ENCODE measurements at regions of chr15 and their contacts with region 1.

Region 1: GRCh38 chr15:89740137-89740536 is 10.9 kb downstream of the MESP1 start:
- DNase-seq: peak; percentile 52
- H3K4me3 ChIP-seq: no peak overlapping the region
- H3K27ac ChIP-seq: no peak overlapping the region
- H3K4me1 ChIP-seq: no peaks in the 10 kb centered on the region
- H3K27me3 ChIP-seq: no peaks in the 10 kb centered on the region
- CTCF ChIP-seq: peak; percentile 89

Region 2: GRCh38 chr15:89704411-89704810 is 35.7 kb before region 1 on chr15:
- CTCF ChIA-PET with region 1: no interaction called
- dilution Hi-C with region 1: loop called (anchors 5 kb)
- in situ Hi-C with region 1: no loop called
- intact Hi-C with region 1: no loop called
- DNase-seq: no peak
- H3K4me3 ChIP-seq: no peak overlapping the region
- H3K27ac ChIP-seq: no peak overlapping the region
- H3K4me1 ChIP-seq: no peaks in the 10 kb centered on the region
- H3K27me3 ChIP-seq: no peaks in the 10 kb centered on the region
- CTCF ChIP-seq: no peak

Region 3: DNA sequence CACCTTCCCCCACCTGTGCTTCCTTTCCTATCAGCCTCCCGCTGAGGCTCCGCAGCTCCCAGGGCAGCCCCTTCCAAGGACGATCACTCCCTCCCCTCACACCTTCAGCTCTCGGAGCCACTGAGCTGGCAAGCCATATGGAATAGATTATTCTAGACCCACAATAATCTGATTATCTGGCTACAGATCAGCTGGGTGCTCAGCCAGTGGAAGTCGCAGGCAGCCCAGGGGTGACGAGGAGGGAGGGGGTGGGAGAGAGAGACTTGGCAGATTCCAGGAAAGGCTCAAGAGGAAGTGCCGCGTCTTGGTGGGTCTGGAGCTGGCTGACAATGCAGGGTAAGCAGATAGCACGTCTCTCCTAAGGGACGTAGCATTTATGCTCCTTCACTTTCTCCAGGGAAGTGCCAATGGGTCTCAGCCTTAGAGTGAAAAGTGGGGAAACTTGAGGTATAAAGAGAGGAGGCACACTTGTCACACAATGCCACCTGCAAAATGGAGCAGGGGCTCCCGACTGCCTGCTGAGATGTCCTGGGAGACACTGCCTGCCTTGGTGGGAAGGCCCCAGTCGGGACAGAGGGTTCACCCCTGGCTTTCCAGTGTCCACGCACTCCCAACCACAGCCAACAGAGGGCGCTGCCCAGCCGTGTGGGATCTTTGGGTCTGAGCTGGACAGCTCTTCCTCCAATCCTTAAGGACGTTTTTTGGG is 20.3 kb after region 1 on chr15:
- CTCF ChIA-PET with region 1: interaction called, 7 read pairs
- dilution Hi-C with region 1: no loop called
- in situ Hi-C with region 1: no loop called
- intact Hi-C with region 1: loop called (anchors 1 kb)
- DNase-seq: peak; percentile 68
- H3K4me3 ChIP-seq: no peak overlapping the region
- H3K27ac ChIP-seq: no peak overlapping the region
- H3K4me1 ChIP-seq: peaks cover 16% of the 10 kb centered on the region
- H3K27me3 ChIP-seq: no peaks in the 10 kb centered on the region
- CTCF ChIP-seq: peak; percentile 92 to 99

Region 4: GRCh38 chr15:89874926-89875564 is 134.9 kb after region 1 on chr15:
- CTCF ChIA-PET with region 1: interaction called, 13 read pairs
- dilution Hi-C with region 1: no loop called
- in situ Hi-C with region 1: no loop called
- intact Hi-C with region 1: loop called (anchors 1 kb)
- DNase-seq: peak; percentile 50
- H3K4me3 ChIP-seq: no peak overlapping the region
- H3K27ac ChIP-seq: no peak overlapping the region
- H3K4me1 ChIP-seq: no peaks in the 10 kb centered on the region
- H3K27me3 ChIP-seq: no peaks in the 10 kb centered on the region
- CTCF ChIP-seq: peak; percentile 90 to 98

Region 5: DNA sequence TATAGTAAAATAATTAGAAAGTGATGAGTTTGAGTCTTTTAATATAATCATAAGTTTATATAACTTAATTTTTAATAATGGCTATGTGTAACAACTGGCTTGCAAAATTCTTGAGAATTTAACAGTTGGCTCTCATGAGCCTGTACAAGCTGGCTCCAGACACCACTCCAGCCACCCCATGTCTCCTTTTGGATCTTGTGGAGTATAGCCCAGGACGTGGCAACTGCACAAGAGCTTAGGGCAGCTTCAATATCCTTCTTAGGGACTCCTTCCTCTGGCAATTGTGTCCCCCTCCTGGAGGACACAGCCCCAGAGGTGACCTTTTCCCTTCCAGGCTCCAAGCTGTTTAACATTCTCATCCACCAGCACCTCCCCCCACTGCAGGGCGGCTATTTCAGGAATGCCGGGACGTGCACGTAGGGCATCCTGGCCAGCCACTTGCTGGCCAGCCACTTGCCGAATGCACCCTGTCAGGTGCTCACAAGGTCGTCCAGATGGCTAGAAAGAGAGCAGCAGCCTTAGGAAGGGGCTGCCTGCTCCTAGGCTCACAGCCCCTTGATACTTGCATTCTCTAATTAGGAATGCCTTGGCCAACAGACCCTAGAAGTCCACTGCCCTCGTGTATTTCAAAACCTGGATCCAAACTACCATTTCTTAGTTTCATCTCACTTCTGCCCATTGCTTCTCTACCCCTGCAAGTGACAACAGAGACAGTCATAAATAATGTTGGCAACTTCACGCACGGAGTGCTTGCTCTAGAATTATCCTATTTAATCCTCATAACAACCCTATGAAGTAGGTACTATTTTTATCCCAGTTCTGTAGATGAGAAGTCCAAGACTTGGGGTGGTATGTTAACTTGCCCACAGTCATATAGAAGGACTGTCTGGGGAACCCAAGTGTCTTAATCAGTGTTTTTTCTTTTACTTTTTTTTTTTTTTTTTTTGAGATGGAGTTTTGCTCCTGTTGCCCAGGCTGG is 386.6 kb after region 1 on chr15:
- CTCF ChIA-PET with region 1: interaction called, 23 read pairs
- dilution Hi-C with region 1: no loop called
- in situ Hi-C with region 1: no loop called
- intact Hi-C with region 1: no loop called
- DNase-seq: no peak
- H3K4me3 ChIP-seq: no peak overlapping the region
- H3K27ac ChIP-seq: no peak overlapping the region
- H3K4me1 ChIP-seq: no peaks in the 10 kb centered on the region
- H3K27me3 ChIP-seq: no peaks in the 10 kb centered on the region
- CTCF ChIP-seq: no peak